ENCODE measurements at regions of chr1 and their contacts with region 1.

Region 1: GRCh38 chr1:63593303-63593885 is at the start of gene PGM1:
- DNase-seq: peak; percentile 53 to 87 (median 76)
- ATAC-seq: peak; percentile 79
- H3K4me3 ChIP-seq: peak within 1 kb of the TSS; percentile 88 to 99
- H3K4me3 Mint-ChIP-seq: peak within 1 kb of the TSS; percentile 98
- H3K27ac ChIP-seq: peak within 1 kb of the TSS; percentile 88 to 93
- H3K27ac Mint-ChIP-seq: peak within 1 kb of the TSS; percentile 98
- H3K4me1 ChIP-seq: peaks cover 9% of the 10 kb centered on the region
- H3K4me1 Mint-ChIP-seq: peaks cover 38% of the 10 kb centered on the region
- H3K27me3 ChIP-seq: no peaks in the 10 kb centered on the region
- H3K27me3 Mint-ChIP-seq: no peaks in the 10 kb centered on the region
- CTCF ChIP-seq: no peak
- total RNA-seq, gene PGM1: 4.3 to 5.0 TPM

Region 2: DNA sequence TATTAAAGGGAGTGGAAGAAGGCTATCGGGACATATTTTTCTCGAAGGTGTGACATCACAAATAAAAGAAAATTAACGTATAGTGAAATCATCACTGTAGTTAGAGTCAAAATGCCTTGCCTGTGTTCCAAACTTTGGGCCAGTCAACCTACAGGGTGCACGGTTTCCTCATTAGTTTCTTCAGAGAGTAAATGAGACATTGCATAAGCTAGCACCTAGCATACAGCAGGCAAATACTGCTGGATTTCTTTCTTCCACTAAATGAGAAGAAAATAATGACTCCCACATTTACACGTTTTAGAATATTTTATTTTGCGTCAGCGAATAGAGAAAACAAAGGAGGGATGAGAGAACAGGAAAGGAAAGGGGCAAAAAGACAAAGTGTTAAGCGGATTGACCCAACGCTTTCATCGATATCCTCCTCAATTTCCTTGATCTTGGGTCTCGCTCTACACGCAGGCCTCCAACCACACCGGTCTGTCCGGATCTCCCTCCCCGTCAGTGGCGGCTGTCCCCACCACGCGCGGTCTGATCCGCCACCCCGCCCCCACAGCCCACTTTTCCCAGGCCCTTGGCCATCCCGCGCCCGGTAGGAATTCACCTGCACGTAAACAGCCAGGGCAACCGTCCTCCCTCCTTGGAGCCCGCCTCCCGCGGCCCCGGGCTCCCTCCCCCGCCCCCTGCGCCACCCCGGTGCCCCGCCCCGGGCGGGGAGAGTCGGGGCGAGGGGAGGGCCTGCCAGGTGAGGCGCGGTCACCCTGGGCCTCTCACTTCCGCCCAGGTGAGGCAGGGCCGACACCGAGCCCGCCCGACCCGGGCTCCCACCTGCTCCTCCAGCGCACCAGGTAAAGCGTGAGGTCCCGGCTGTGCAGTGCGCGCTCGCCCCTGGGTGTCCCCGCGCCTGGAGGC is 1851.4 kb before region 1 on chr1 and contains the start of gene PATJ:
- CTCF ChIA-PET with region 1: no interaction called
- POLR2A ChIA-PET with region 1: no interaction called
- intact Hi-C with region 1: loop called in 1 of 2 experiments (anchors 10 kb)
- DNase-seq: peak; percentile 22 to 81 (median 68)
- ATAC-seq: peak; percentile 90
- H3K4me3 ChIP-seq: peak within 1 kb of the TSS; percentile 49 to 78
- H3K4me3 Mint-ChIP-seq: peak within 1 kb of the TSS; percentile 95
- H3K27ac ChIP-seq: peak within 1 kb of the TSS; percentile 60 to 68
- H3K27ac Mint-ChIP-seq: peak within 1 kb of the TSS; percentile 94
- H3K4me1 ChIP-seq: peaks cover 7% of the 10 kb centered on the region
- H3K4me1 Mint-ChIP-seq: peaks cover 31% of the 10 kb centered on the region
- H3K27me3 ChIP-seq: no peaks in the 10 kb centered on the region
- H3K27me3 Mint-ChIP-seq: no peaks in the 10 kb centered on the region
- CTCF ChIP-seq: no peak
- total RNA-seq, gene PATJ: 33.7 to 35.4 TPM

Region 3: GRCh38 chr1:62783723-62784508 is 809.5 kb before region 1 on chr1 and contains the start of gene ATG4C:
- CTCF ChIA-PET with region 1: no interaction called
- POLR2A ChIA-PET with region 1: no interaction called
- intact Hi-C with region 1: loop called (anchors 1 to 5 kb)
- DNase-seq: peak; percentile 82 to 97 (median 91)
- ATAC-seq: peak; percentile 95
- H3K4me3 ChIP-seq: peak within 1 kb of the TSS; percentile 82 to 97
- H3K4me3 Mint-ChIP-seq: no peak within 1 kb of the TSS
- H3K27ac ChIP-seq: peak within 1 kb of the TSS; percentile 90 to 96
- H3K27ac Mint-ChIP-seq: no peak within 1 kb of the TSS
- H3K4me1 ChIP-seq: peaks cover 11% of the 10 kb centered on the region
- H3K4me1 Mint-ChIP-seq: peaks cover 16% of the 10 kb centered on the region
- H3K27me3 ChIP-seq: peaks cover 0 to 2% of the 10 kb centered on the region in 2 experiments
- H3K27me3 Mint-ChIP-seq: peaks cover 10% of the 10 kb centered on the region
- CTCF ChIP-seq: no peak
- total RNA-seq, gene ATG4C: 2.7 to 6.3 TPM

Region 4: DNA sequence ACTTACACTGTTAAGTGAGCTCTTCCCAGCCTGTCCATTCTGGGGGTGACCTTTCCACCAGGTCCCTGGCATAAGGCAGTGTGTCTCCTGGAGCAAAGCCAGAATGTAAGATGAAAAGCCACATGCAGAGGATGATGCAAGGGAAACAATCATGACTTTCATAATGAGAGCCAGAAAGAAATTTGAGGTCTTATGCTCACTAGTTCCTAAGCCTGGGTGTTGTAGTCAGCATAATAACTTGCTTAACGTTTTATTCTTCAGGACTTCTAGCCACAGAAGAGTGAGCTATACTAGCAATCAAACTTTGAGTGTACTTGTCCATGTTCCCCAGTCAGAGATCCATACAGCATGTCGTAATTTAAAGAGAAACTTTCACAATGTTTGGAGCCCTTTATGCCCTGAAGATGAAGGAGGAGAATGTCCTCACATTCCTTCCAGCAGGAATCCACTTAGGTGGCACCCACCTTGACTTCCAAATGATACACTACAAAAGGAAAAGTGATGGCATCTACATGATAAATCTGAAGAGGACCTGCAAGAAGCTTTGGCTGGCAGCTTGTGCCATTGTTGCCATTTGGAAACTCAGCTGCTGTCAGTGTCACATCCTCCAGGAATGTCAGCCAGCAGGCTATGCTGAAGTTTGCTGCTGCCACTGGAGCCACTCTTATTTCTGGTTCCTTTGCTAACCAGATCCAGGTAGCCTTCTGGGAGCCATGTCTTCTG is 331.5 kb before region 1 on chr1:
- CTCF ChIA-PET with region 1: no interaction called
- POLR2A ChIA-PET with region 1: no interaction called
- intact Hi-C with region 1: no loop called
- DNase-seq: no peak
- ATAC-seq: no peak
- H3K4me3 ChIP-seq: no peak overlapping the region
- H3K4me3 Mint-ChIP-seq: no peak overlapping the region
- H3K27ac ChIP-seq: no peak overlapping the region
- H3K27ac Mint-ChIP-seq: no peak overlapping the region
- H3K4me1 ChIP-seq: no peaks in the 10 kb centered on the region
- H3K4me1 Mint-ChIP-seq: no peaks in the 10 kb centered on the region
- H3K27me3 ChIP-seq: no peaks in the 10 kb centered on the region
- H3K27me3 Mint-ChIP-seq: peaks cover 20% of the 10 kb centered on the region
- CTCF ChIP-seq: no peak

Region 5: DNA sequence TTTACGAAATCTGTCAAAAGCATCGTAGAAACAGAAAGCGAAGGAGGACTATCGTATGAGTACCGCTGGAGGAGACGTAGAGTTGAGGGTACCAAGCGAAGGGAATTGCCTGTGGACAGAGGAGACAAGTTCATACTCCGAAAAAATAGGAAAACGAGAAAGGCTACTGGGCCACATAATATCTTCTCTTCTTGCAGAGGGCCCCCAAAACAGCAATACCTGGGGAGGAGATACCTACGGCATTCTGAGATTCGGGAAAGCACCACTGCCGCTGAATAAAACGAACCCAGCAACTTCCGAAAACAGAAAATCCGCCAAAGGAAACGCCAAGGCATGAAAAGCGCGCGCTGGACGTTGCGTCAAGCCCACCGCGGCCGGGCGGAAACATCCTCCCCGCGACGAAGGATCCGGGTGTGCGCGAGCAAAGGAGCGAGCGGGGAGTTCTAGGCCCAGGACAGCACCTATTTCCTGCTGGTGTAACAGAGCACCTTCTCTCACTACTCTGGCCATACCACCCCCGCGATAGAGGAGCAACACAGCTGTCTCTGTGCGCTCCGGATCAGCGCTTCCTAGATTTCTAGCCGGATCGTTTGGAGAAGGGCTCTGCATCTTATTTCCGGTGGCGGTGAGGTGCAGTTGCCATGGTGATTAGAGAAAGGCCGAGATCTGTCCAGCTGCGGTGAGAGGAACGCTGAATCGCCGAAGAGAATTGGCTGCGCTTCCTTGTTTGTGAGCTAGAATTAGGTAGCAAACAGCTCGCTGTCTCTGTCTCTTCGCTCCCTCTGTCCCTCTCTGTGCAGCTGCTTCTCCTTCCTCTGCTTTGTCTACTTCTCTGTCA is 70.3 kb before region 1 on chr1 and contains the starts of genes EFCAB7 and ITGB3BP:
- CTCF ChIA-PET with region 1: no interaction called
- POLR2A ChIA-PET with region 1: interaction called, 6 read pairs
- intact Hi-C with region 1: loop called (anchors 1 kb)
- DNase-seq: peak; percentile 65 to 90 (median 81)
- ATAC-seq: peak; percentile 85
- H3K4me3 ChIP-seq: peak within 1 kb of the TSS; percentile 67 to 80
- H3K4me3 Mint-ChIP-seq: peak within 1 kb of the TSS; percentile 97
- H3K27ac ChIP-seq: peak within 1 kb of the TSS; percentile 79 to 90
- H3K27ac Mint-ChIP-seq: peak within 1 kb of the TSS; percentile 95
- H3K4me1 ChIP-seq: peaks cover 25% of the 10 kb centered on the region
- H3K4me1 Mint-ChIP-seq: peaks cover 27% of the 10 kb centered on the region
- H3K27me3 ChIP-seq: no peaks in the 10 kb centered on the region
- H3K27me3 Mint-ChIP-seq: no peaks in the 10 kb centered on the region
- CTCF ChIP-seq: no peak
- total RNA-seq, gene EFCAB7: 6.5 to 8.2 TPM
- total RNA-seq, gene ITGB3BP: 7.9 to 8.6 TPM

Region 6: DNA sequence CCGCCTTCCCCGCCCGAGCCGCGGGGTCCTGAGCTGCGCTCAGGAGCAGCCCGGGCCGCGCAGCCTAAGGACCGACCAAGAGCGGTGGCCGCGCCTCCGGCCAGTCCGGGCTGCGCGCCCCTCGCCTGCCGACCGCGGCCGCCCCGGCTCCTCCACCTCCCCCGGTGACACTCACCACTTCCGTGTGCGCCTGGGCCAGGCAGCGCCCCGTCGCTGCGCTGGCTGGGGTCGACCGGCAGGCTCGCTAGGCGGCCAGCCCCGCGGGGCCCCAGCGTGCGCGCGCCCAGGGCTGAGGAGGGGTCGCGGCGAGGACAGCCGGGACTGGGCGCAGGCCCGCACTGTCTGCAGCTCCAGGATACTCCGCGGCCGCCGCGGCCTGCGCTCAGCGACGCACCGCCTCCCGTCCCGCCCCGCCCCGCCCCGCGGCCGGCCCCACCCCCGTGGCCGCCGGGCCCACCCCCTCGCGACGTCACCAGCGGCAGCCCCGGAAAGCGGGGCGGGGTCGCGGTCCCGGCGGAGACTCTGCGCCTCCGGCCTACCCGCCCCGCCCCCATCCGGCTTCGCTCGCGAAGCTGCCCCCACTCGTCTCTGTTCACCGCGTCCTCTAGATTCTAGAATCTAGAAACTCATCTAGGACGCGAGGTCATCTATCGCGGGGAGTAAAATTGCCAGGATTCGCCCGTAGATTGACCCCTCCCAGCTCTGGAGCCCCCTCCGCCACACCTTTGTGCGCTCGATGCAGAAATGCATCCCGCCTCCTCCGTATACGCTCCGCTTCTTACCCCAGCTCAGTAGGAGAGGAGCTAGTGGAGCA is 1373.0 kb after region 1 on chr1 and contains the start of gene JAK1:
- CTCF ChIA-PET with region 1: no interaction called
- POLR2A ChIA-PET with region 1: no interaction called
- intact Hi-C with region 1: loop called in 1 of 2 experiments (anchors 10 kb)
- DNase-seq: peak; percentile 77 to 95 (median 92)
- ATAC-seq: peak; percentile 83
- H3K4me3 ChIP-seq: peak within 1 kb of the TSS; percentile 81 to 95
- H3K4me3 Mint-ChIP-seq: peak within 1 kb of the TSS; percentile 92
- H3K27ac ChIP-seq: peak within 1 kb of the TSS; percentile 87 to 97
- H3K27ac Mint-ChIP-seq: peak within 1 kb of the TSS; percentile 97
- H3K4me1 ChIP-seq: peaks cover 51% of the 10 kb centered on the region
- H3K4me1 Mint-ChIP-seq: peaks cover 51% of the 10 kb centered on the region
- H3K27me3 ChIP-seq: no peaks in the 10 kb centered on the region
- H3K27me3 Mint-ChIP-seq: no peaks in the 10 kb centered on the region
- CTCF ChIP-seq: no peak
- total RNA-seq, gene JAK1: 280 to 298 TPM

Region 7: DNA sequence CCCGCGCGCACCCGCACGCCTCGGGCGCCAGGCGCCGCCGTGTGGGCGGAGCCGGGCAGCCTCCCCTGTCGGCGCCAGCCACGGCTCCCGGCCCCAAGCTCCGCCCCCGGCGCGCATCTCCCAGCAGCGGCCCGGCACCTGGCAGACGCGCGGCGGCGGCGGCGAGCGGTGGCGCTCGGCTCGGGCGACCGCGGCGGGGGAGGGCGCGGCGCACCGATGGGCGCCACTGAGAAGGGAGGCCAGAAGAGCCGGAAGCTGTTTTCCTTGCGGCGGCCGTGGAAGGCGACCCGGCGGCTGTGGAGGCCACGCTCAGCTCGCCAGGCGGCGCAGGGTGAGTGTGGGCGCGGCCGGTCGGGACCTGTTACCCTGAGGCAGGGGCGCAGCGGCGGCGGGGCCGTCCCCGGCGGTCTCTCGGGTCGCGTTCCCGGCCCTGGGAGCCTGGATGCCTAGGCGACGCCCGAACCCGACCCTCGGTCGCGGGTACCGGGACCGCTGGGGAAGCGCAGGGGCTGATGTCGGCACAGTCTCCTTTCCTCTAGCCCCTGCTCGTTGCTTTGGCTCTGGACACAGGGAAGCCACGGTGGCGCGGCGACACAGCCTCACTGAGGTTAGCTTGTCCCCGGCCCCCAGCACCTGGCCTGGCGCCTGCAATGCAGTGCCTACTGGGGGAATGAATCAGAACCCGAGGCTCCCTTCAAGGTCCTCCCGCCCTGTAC is 1661.1 kb after region 1 on chr1:
- CTCF ChIA-PET with region 1: no interaction called
- POLR2A ChIA-PET with region 1: no interaction called
- intact Hi-C with region 1: loop called in 1 of 2 experiments (anchors 10 kb)
- DNase-seq: peak; percentile 72 to 93 (median 84)
- ATAC-seq: peak; percentile 97
- H3K4me3 ChIP-seq: peak overlapping the region; percentile 77 to 91
- H3K4me3 Mint-ChIP-seq: peak overlapping the region; percentile 97
- H3K27ac ChIP-seq: peak overlapping the region in 1 of 2 experiments; percentile 57
- H3K27ac Mint-ChIP-seq: no peak overlapping the region
- H3K4me1 ChIP-seq: peaks cover 17% of the 10 kb centered on the region
- H3K4me1 Mint-ChIP-seq: peaks cover 18% of the 10 kb centered on the region
- H3K27me3 ChIP-seq: no peaks in the 10 kb centered on the region
- H3K27me3 Mint-ChIP-seq: peaks cover 10% of the 10 kb centered on the region
- CTCF ChIP-seq: no peak

Measured in CD8-positive, alpha-beta T cell (primary cell).